OCI-LY7 (cell line): ENCODE measurements at regions of chr9 and their contacts with region 1.

Region 1: GRCh38 chr9:127214421-127215267 is 49.9 kb upstream of the GARNL3 start:
- DNase-seq: peak; percentile 79
- H3K4me3 ChIP-seq: no peak overlapping the region
- H3K27ac ChIP-seq: no peak overlapping the region
- H3K4me1 ChIP-seq: no peaks in the 10 kb centered on the region
- CTCF ChIP-seq: peak; percentile 96

Region 2: GRCh38 chr9:127187231-127187956 is 27.2 kb before region 1 on chr9:
- CTCF ChIA-PET with region 1: no interaction called
- POLR2A ChIA-PET with region 1: no interaction called
- intact Hi-C with region 1: no loop called
- DNase-seq: no peak
- H3K4me3 ChIP-seq: no peak overlapping the region
- H3K27ac ChIP-seq: no peak overlapping the region
- H3K4me1 ChIP-seq: no peaks in the 10 kb centered on the region
- CTCF ChIP-seq: no peak

Region 3: DNA sequence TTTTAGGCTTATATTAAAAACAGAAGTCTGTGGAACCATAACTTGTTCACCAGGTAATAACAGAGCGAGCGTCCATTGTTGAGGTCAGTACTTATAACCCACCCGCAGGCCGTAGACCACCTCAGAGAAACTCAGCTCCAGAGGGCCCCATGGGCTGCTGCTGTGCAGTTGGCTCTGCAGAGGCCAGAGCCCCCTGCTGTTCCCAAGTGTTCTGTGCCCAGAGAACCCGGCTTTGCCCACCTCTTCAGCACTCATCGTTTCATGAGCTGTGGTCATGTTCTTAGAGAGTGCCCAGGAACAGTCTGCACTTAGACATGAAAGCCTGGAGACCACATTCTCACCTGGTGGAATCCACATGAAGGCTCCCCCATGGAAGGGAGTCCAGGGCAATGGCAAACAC is 131.9 kb after region 1 on chr9:
- CTCF ChIA-PET with region 1: no interaction called
- POLR2A ChIA-PET with region 1: no interaction called
- intact Hi-C with region 1: loop called (anchors 1 kb)
- DNase-seq: peak; percentile 26
- H3K4me3 ChIP-seq: no peak overlapping the region
- H3K27ac ChIP-seq: no peak overlapping the region
- H3K4me1 ChIP-seq: no peaks in the 10 kb centered on the region
- CTCF ChIP-seq: peak; percentile 64

Region 4: GRCh38 chr9:127423934-127424675 is 209.5 kb after region 1 on chr9 and contains the start of gene ZNF79:
- CTCF ChIA-PET with region 1: no interaction called
- POLR2A ChIA-PET with region 1: no interaction called
- intact Hi-C with region 1: loop called (anchors 2 kb)
- DNase-seq: peak; percentile 89
- H3K4me3 ChIP-seq: peak within 1 kb of the TSS; percentile 84
- H3K27ac ChIP-seq: peak within 1 kb of the TSS; percentile 41
- H3K4me1 ChIP-seq: peaks cover 22% of the 10 kb centered on the region
- CTCF ChIP-seq: 0 out of 2 replicates have a peak, but pooled peaks have one; percentile 3
- total RNA-seq, gene ZNF79: 14.1 and 14.9 TPM in 2 replicates